CD8-positive, alpha-beta T cell (primary cell): ENCODE measurements at regions of chr18 and their contacts with region 1.

Region 1: GRCh38 chr18:37702841-37703240 is 137.2 kb upstream of the CELF4 start:
- DNase-seq: no peak
- ATAC-seq: no peak
- H3K4me3 ChIP-seq: no peak overlapping the region
- H3K4me3 Mint-ChIP-seq: no peak overlapping the region
- H3K27ac ChIP-seq: no peak overlapping the region
- H3K27ac Mint-ChIP-seq: no peak overlapping the region
- H3K4me1 ChIP-seq: no peaks in the 10 kb centered on the region
- H3K4me1 Mint-ChIP-seq: no peaks in the 10 kb centered on the region
- H3K27me3 ChIP-seq: no peaks in the 10 kb centered on the region
- H3K27me3 Mint-ChIP-seq: no peaks in the 10 kb centered on the region
- CTCF ChIP-seq: no peak

Region 2: GRCh38 chr18:37729716-37730115 is 26.9 kb after region 1 on chr18:
- CTCF ChIA-PET with region 1: no interaction called
- POLR2A ChIA-PET with region 1: no interaction called
- intact Hi-C with region 1: loop called in 1 of 2 experiments (anchors 1 kb)
- DNase-seq: no peak
- ATAC-seq: no peak
- H3K4me3 ChIP-seq: no peak overlapping the region
- H3K4me3 Mint-ChIP-seq: no peak overlapping the region
- H3K27ac ChIP-seq: no peak overlapping the region
- H3K27ac Mint-ChIP-seq: no peak overlapping the region
- H3K4me1 ChIP-seq: no peaks in the 10 kb centered on the region
- H3K4me1 Mint-ChIP-seq: no peaks in the 10 kb centered on the region
- H3K27me3 ChIP-seq: no peaks in the 10 kb centered on the region
- H3K27me3 Mint-ChIP-seq: no peaks in the 10 kb centered on the region
- CTCF ChIP-seq: no peak

Region 3: GRCh38 chr18:37796823-37797349 is 94.0 kb after region 1 on chr18:
- CTCF ChIA-PET with region 1: no interaction called
- POLR2A ChIA-PET with region 1: no interaction called
- intact Hi-C with region 1: no loop called
- DNase-seq: no peak
- ATAC-seq: no peak
- H3K4me3 ChIP-seq: no peak overlapping the region
- H3K4me3 Mint-ChIP-seq: no peak overlapping the region
- H3K27ac ChIP-seq: no peak overlapping the region
- H3K27ac Mint-ChIP-seq: no peak overlapping the region
- H3K4me1 ChIP-seq: no peaks in the 10 kb centered on the region
- H3K4me1 Mint-ChIP-seq: no peaks in the 10 kb centered on the region
- H3K27me3 ChIP-seq: no peaks in the 10 kb centered on the region
- H3K27me3 Mint-ChIP-seq: no peaks in the 10 kb centered on the region
- CTCF ChIP-seq: no peak